Activated naive CD4-positive, alpha-beta T cell treated with anti-CD3 and anti-CD28 coated beads for 36 hours (primary cell): ENCODE measurements at regions of chr11 and their contacts with region 1.

Region 1: GRCh38 chr11:2298795-2299761 is 2.6 kb downstream of the C11orf21 start:
- DNase-seq: peak; percentile 53
- H3K4me3 Mint-ChIP-seq: no peak overlapping the region
- H3K27ac Mint-ChIP-seq: peak overlapping the region; percentile 50
- H3K4me1 Mint-ChIP-seq: peaks cover 36% of the 10 kb centered on the region
- H3K27me3 Mint-ChIP-seq: no peaks in the 10 kb centered on the region

Region 2: GRCh38 chr11:2196970-2197770 is 101.9 kb before region 1 on chr11:
- CTCF ChIA-PET with region 1: interaction called, 29 read pairs
- intact Hi-C with region 1: loop called (anchors 1 kb)
- DNase-seq: peak; percentile 82
- H3K4me3 Mint-ChIP-seq: no peak overlapping the region
- H3K27ac Mint-ChIP-seq: no peak overlapping the region
- H3K4me1 Mint-ChIP-seq: no peaks in the 10 kb centered on the region
- H3K27me3 Mint-ChIP-seq: no peaks in the 10 kb centered on the region

Region 3: GRCh38 chr11:2269601-2270321 is 29.3 kb before region 1 on chr11:
- CTCF ChIA-PET with region 1: interaction called, 3 read pairs
- intact Hi-C with region 1: loop called (anchors 2 kb)
- DNase-seq: peak; percentile 51
- H3K4me3 Mint-ChIP-seq: peak overlapping the region; percentile 36
- H3K27ac Mint-ChIP-seq: no peak overlapping the region
- H3K4me1 Mint-ChIP-seq: peaks cover 25% of the 10 kb centered on the region
- H3K27me3 Mint-ChIP-seq: peaks cover 25% of the 10 kb centered on the region

Region 4: DNA sequence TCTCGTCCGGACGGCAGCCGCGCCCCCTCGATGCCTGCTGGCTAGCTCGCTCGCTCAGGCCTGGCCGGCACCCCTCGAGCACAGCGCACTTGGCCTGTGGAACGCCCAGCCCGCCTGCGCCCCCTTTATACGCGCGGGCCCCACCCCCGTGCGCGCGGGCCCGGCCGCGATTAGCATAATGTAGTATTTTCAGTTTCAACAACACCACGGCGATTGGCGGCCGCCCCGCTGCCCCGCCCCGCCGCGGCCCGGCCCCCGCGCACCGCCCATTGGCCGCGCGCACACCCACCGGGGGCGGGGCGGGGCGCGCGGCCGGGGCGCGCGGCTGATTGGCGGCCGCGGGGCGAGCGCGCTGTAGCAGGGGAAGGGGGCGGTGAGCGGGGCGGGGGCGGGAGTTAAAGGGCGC is 586.6 kb after region 1 on chr11 and contains the start of gene CDKN1C:
- CTCF ChIA-PET with region 1: interaction called, 5 read pairs
- intact Hi-C with region 1: loop called (anchors 5 kb)
- DNase-seq: peak; percentile 76
- H3K4me3 Mint-ChIP-seq: peak within 1 kb of the TSS; percentile 71
- H3K27ac Mint-ChIP-seq: no peak within 1 kb of the TSS
- H3K4me1 Mint-ChIP-seq: no peaks in the 10 kb centered on the region
- H3K27me3 Mint-ChIP-seq: peaks cover 3% of the 10 kb centered on the region
- total RNA-seq, gene CDKN1C: 0.17 to 0.26 TPM

Region 5: GRCh38 chr11:2901854-2902783 is 603.0 kb after region 1 on chr11:
- CTCF ChIA-PET with region 1: no interaction called
- intact Hi-C with region 1: loop called (anchors 5 kb)
- DNase-seq: peak; percentile 98
- H3K4me3 Mint-ChIP-seq: peak overlapping the region; percentile 72
- H3K27ac Mint-ChIP-seq: peak overlapping the region; percentile 41
- H3K4me1 Mint-ChIP-seq: peaks cover 33% of the 10 kb centered on the region
- H3K27me3 Mint-ChIP-seq: no peaks in the 10 kb centered on the region